ENCODE measurements at regions of chr4 and their contacts with region 1.

Region 1: GRCh38 chr4:9762823-9763475 is 18.5 kb upstream of the DRD5 start:
- DNase-seq: peak; percentile 40 to 64 (median 46)
- ATAC-seq: peak; percentile 72
- H3K4me3 ChIP-seq: no peak overlapping the region
- H3K27ac ChIP-seq: no peak overlapping the region
- H3K4me1 ChIP-seq: no peaks in the 10 kb centered on the region
- H3K27me3 ChIP-seq: peaks cover 0 to 7% of the 10 kb centered on the region in 2 experiments; a peak in 1 of 5 replicates
- CTCF ChIP-seq: peak; percentile 66 to 81 (median 70); a peak in 5 of 6 replicates
- EP300 ChIP-seq: no peak
- POLR2A ChIP-seq: no peak
- RAD21 ChIP-seq: peak; percentile 86 to 88

Region 2: DNA sequence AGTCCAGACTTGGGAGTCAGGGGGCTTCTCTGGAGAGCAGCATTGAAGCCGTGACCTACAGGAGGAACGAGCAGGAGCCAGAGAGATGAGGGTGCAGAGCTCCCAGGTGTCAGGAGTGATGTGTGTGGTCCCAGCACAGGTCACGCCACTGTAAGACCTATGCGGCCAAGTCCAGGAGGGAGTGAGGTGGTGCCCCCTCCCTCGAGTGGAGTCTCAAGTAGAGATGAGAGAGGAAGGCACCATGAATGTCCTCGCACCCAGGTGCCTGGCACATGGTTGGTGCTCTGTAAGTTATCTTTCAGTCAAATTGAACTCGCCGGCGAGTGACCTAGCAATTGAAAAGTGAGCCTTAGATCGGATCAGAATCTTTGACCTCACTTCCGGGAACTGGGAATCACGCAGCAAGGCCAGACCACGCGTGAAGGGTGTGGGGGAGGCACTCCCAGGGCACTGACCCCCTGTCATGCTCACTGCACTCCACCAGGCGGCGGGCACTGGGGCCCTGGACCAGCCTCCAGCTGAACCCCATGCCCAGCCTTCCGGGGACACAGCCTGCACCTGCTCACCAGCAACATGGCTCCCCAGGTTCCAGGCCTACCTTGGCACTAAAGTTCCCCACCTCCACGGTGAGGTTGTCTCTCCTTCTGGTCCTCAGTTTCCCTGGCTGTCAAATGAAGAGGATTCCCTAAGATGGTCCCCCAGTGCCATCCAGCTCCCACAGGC is 1018.7 kb before region 1 on chr4:
- CTCF ChIA-PET with region 1: no interaction called
- POLR2A ChIA-PET with region 1: no interaction called
- in situ Hi-C with region 1: no loop called
- intact Hi-C with region 1: no loop called
- DNase-seq: peak in 3 of 4 experiments; percentile 19 to 30 (median 23)
- ATAC-seq: peak; percentile 46; the same call in 1 of the 3 replicates
- H3K4me3 ChIP-seq: no peak overlapping the region
- H3K27ac ChIP-seq: no peak overlapping the region
- H3K4me1 ChIP-seq: no peaks in the 10 kb centered on the region
- H3K27me3 ChIP-seq: peaks cover 0 to 28% of the 10 kb centered on the region in 2 experiments; a peak in 3 of 5 replicates
- CTCF ChIP-seq: peak in 1 of 3 experiments; percentile 20; a peak in 1 of 6 replicates
- EP300 ChIP-seq: no peak
- POLR2A ChIP-seq: no peak
- RAD21 ChIP-seq: no peak

Region 3: DNA sequence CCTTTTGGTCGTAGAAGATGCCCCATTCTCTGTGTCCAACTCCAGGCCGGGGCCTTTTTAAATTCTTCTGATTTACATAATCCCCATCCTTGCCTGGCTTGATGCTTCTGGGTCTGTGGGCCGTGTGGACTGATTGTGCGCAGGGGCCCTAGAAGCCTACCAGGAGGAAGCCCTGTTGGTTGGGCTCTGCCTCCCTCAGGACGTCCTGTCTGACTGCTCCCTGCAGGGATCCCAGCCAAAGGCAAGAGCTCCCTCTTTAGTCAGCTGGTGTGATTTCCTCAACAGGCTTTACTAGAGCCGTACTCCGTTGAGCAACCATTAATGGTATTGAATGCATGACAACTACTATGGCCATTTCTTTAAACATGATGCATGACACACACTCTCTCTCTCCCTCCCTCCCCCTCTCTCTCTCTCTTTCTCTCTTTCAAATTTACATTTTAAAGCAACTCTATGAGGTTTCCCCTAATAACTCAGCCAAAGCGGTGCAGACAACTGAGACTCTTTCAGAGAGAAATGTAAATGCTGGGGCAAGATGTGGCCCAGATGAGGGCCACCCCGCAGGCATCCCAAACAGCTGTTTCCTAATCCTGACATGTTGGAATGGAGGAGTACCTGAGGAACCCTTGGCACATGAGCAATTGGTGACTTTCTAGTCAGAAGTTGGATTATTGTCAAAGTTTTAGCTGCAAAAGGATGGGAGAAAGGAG is 135.8 kb after region 1 on chr4:
- CTCF ChIA-PET with region 1: interaction called, 3 read pairs
- POLR2A ChIA-PET with region 1: no interaction called
- in situ Hi-C with region 1: no loop called
- intact Hi-C with region 1: loop called (anchors 1 kb)
- DNase-seq: peak in 2 of 4 experiments; percentile 22 to 33
- ATAC-seq: peak; percentile 90
- H3K4me3 ChIP-seq: no peak overlapping the region
- H3K27ac ChIP-seq: no peak overlapping the region
- H3K4me1 ChIP-seq: no peaks in the 10 kb centered on the region; a peak in 1 of 5 replicates
- H3K27me3 ChIP-seq: peaks cover 0 to 5% of the 10 kb centered on the region in 2 experiments; a peak in 1 of 5 replicates
- CTCF ChIP-seq: peak; percentile 53 to 66 (median 66)
- EP300 ChIP-seq: no peak
- POLR2A ChIP-seq: no peak
- RAD21 ChIP-seq: peak; percentile 49 to 71

Region 4: DNA sequence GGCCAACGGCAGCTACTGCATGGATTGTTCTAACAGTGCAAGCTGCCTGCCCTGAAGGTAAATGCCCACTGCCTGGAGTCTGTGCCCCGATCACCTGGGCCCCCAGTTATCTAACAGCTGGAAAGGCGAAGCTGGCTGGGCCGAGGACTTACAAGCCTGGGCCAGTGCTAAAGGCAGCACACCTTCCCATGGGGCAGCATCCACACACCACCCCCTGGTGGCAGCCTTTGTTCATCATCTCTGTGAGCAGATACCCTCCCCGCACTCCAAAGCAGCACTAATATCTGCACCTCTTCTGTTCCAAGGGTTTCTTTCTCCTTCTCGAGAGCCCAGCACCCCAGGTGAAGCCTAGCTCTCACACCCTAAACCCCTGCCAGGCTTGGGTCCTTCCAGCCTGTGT is 250.8 kb after region 1 on chr4:
- CTCF ChIA-PET with region 1: interaction called, 15 read pairs
- POLR2A ChIA-PET with region 1: interaction called, 3 read pairs
- in situ Hi-C with region 1: loop called (anchors 5 kb)
- intact Hi-C with region 1: loop called (anchors 1 kb)
- DNase-seq: peak; percentile 64 to 71 (median 68)
- ATAC-seq: peak; percentile 91
- H3K4me3 ChIP-seq: no peak overlapping the region
- H3K27ac ChIP-seq: no peak overlapping the region
- H3K4me1 ChIP-seq: peaks cover 3 to 10% of the 10 kb centered on the region in 2 experiments; a peak in 3 of 5 replicates
- H3K27me3 ChIP-seq: peaks cover 0 to 6% of the 10 kb centered on the region in 2 experiments; a peak in 1 of 5 replicates
- CTCF ChIP-seq: peak; percentile 72 to 82 (median 75)
- EP300 ChIP-seq: no peak
- POLR2A ChIP-seq: no peak
- RAD21 ChIP-seq: peak; percentile 54 to 78

Region 5: DNA sequence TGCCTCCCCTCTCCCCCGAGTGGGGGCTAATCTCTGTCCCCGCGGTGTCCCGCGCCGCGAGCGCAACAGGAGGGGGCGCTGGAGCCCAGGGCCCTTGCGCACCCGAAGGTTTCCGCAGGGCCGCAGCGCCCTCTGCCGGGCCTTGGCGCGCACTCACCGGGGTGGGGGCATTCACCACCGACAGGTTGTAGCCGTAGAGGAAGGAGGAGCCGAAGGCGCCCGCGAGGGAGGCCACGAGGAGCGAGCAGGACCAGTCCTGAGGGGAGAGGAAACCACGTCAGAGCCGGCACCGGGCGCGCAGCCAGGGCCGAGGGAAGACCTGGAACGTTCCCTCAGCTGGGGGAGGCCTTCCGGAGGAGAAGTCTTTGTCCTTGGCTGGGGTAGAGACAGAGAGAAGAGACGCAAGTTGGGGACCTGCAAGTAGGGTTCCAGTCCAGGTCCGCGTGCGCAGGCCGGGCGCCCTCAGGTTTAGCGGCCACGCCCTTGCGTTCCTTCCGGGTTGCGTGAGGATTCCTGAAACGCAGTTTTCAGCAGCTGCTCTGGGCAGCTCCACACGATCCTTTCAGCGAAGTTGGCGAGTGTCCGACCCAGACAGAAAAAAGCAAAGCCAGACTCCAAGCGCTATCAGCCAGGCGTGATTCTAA is 256.0 kb after region 1 on chr4:
- CTCF ChIA-PET with region 1: interaction called, 15 read pairs
- POLR2A ChIA-PET with region 1: interaction called, 3 read pairs
- in situ Hi-C with region 1: loop called (anchors 5 kb)
- intact Hi-C with region 1: no loop called
- DNase-seq: peak; percentile 92 to 93 (median 92)
- ATAC-seq: peak; percentile 98
- H3K4me3 ChIP-seq: peak overlapping the region; percentile 25; the same call in 1 of the 2 replicates
- H3K27ac ChIP-seq: peak overlapping the region; percentile 55
- H3K4me1 ChIP-seq: peaks cover 6 to 12% of the 10 kb centered on the region in 2 experiments; a peak in 4 of 5 replicates
- H3K27me3 ChIP-seq: peaks cover 3 to 10% of the 10 kb centered on the region in 2 experiments; a peak in 3 of 5 replicates
- CTCF ChIP-seq: peak; percentile 99 to 100 (median 100)
- EP300 ChIP-seq: no peak
- POLR2A ChIP-seq: peak; percentile 66
- RAD21 ChIP-seq: peak; percentile 97 to 98

Region 6: GRCh38 chr4:10063544-10064300 is 300.8 kb after region 1 on chr4:
- CTCF ChIA-PET with region 1: interaction called, 4 read pairs
- POLR2A ChIA-PET with region 1: no interaction called
- in situ Hi-C with region 1: no loop called
- intact Hi-C with region 1: loop called (anchors 1 kb)
- DNase-seq: peak in 1 of 4 experiments; percentile 34
- ATAC-seq: peak; percentile 92
- H3K4me3 ChIP-seq: no peak overlapping the region
- H3K27ac ChIP-seq: no peak overlapping the region
- H3K4me1 ChIP-seq: no peaks in the 10 kb centered on the region
- H3K27me3 ChIP-seq: peaks cover 7 to 19% of the 10 kb centered on the region in 2 experiments; a peak in 4 of 5 replicates
- CTCF ChIP-seq: peak; percentile 62 to 76 (median 74)
- EP300 ChIP-seq: no peak
- POLR2A ChIP-seq: no peak
- RAD21 ChIP-seq: peak; percentile 61 to 80

Measured in K562 (cell line).